Endothelial cell of umbilical vein (primary cell): ENCODE measurements at regions of chr12 and their contacts with region 1.

Region 1: DNA sequence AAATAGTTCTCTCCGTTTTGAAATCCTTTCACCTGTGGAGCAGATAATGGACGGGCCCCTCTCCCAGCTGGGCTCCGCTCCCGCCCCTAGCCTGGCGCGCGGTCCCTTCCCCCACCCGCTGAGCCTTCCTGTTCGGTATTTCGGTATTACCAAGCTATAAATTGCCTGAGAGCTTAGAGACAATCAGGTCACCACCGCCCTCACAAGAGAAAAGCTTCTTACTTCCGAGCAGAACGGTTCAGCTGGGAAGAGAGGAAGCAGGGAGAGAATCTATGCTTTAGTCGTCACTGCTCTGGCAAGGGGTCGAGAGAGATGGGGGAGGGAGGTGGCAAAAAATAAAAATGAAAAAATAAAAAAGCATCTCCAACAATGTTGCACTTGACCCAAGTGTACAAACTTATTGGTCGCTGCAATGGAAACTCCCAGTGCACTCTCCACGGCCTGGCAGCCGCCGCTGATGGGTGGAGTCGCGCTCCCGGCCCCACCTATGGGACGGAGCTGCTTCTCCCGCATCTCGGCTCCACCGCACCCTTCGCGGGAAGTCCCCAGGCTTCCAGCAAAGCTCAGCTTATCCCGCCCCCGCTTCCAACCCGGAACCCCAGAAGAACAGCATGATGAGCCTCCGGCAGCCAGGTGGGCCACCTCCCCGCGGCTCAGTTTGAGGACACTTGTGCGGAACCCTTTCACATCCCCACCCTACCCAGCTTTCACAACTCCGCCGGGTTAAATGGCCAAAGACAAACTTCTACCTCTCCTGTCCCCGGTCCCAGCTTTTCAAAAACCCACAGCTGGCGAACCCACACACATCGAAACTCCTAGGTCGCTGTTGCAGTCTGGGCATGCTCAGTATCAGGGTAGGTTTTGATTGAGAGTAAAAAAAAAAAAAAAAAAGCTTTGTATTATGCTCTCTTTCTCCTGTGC is 832 bp upstream of the SYT1 start:
- DNase-seq: peak; percentile 66
- H3K4me3 ChIP-seq: peak overlapping the region; percentile 45 to 91 (median 88)
- H3K27ac ChIP-seq: peak overlapping the region; percentile 69
- H3K4me1 ChIP-seq: peaks cover 9% of the 10 kb centered on the region
- H3K27me3 ChIP-seq: peaks cover 6 to 9% of the 10 kb centered on the region in 2 experiments
- CTCF ChIP-seq: no peak
- POLR2A ChIP-seq: no peak

Region 2: GRCh38 chr12:78562368-78563205 is 301.2 kb before region 1 on chr12:
- CTCF ChIA-PET with region 1: interaction called, 13 read pairs
- POLR2A ChIA-PET with region 1: no interaction called
- dilution Hi-C with region 1: no loop called
- intact Hi-C with region 1: no loop called
- DNase-seq: peak; percentile 46
- H3K4me3 ChIP-seq: no peak overlapping the region
- H3K27ac ChIP-seq: no peak overlapping the region
- H3K4me1 ChIP-seq: no peaks in the 10 kb centered on the region
- H3K27me3 ChIP-seq: peaks cover 5% of the 10 kb centered on the region in 2 experiments
- CTCF ChIP-seq: peak in 1 of 2 donors; percentile 32
- POLR2A ChIP-seq: no peak

Region 3: GRCh38 chr12:78683031-78683430 is 180.7 kb before region 1 on chr12:
- CTCF ChIA-PET with region 1: no interaction called
- POLR2A ChIA-PET with region 1: no interaction called
- dilution Hi-C with region 1: no loop called
- intact Hi-C with region 1: loop called (anchors 5 kb)
- DNase-seq: peak; percentile 52
- H3K4me3 ChIP-seq: no peak overlapping the region
- H3K27ac ChIP-seq: peak overlapping the region; percentile 5
- H3K4me1 ChIP-seq: peaks cover 20% of the 10 kb centered on the region
- H3K27me3 ChIP-seq: no peaks in the 10 kb centered on the region
- CTCF ChIP-seq: no peak
- POLR2A ChIP-seq: no peak

Region 4: DNA sequence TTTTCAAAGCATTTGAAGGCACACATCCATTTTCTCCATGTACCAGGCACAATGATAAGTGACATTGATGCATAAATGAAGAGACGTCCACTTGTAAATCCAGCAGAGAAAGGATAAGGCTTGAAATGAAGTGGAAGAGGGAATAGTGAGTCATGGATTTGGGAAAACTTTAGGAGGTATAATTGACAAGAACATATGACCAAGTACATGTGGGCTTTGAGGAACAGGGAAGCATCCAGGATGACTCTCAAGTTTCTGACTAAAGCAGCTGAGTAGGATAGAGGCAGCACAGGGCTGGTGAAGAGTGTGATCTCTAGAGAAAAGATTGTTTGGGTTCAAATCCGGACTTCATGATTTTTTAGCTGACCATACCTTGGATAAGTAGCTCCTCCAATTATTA is 42.8 kb before region 1 on chr12:
- CTCF ChIA-PET with region 1: no interaction called
- POLR2A ChIA-PET with region 1: no interaction called
- dilution Hi-C with region 1: no loop called
- intact Hi-C with region 1: no loop called
- DNase-seq: no peak
- H3K4me3 ChIP-seq: no peak overlapping the region
- H3K27ac ChIP-seq: no peak overlapping the region
- H3K4me1 ChIP-seq: no peaks in the 10 kb centered on the region
- H3K27me3 ChIP-seq: no peaks in the 10 kb centered on the region
- CTCF ChIP-seq: no peak
- POLR2A ChIP-seq: no peak

Region 5: DNA sequence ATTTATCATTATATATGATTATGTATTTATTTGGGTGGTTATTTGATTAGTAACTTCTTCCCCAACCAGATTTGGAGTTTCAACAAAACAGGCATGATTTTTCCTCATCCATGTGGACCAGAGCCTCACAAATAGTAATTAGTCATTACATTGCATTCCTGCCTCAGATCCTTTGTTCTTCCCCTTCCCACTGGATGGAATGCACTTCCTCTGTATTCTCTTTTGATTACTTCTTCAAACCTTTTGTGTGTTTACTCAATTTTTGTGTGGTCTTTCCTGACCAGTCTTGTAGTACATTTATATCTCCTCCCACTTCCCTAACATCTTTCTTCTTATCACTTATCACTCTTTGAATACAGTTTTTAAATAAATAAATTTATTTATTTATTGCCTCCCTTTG is 16.3 kb after region 1 on chr12:
- CTCF ChIA-PET with region 1: interaction called, 6 read pairs
- POLR2A ChIA-PET with region 1: interaction called, 3 read pairs
- dilution Hi-C with region 1: no loop called
- intact Hi-C with region 1: loop called (anchors 1 kb)
- DNase-seq: peak; percentile 28
- H3K4me3 ChIP-seq: no peak overlapping the region
- H3K27ac ChIP-seq: peak overlapping the region; percentile 32
- H3K4me1 ChIP-seq: peaks cover 16% of the 10 kb centered on the region
- H3K27me3 ChIP-seq: no peaks in the 10 kb centered on the region
- CTCF ChIP-seq: no peak
- POLR2A ChIP-seq: no peak

Region 6: DNA sequence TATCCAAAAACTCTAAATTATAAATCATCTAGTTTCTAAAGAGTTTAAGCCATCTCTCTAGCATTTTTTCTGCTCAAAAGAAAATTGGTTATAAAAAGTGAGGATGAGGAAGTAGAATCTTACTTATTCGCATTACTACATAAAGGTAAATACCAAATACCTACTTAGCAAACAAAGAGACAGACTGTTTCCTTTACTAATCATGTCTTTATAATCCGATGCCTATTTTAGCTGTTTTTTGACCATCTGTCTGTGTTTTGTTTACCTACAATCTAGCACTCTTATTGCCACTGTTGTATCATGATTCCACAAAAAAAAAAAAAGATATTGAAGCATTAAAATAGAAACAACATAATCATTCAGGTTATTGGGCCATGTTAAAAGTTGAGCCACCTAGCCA is 430.8 kb after region 1 on chr12:
- CTCF ChIA-PET with region 1: no interaction called
- POLR2A ChIA-PET with region 1: no interaction called
- dilution Hi-C with region 1: no loop called
- intact Hi-C with region 1: no loop called
- DNase-seq: no peak
- H3K4me3 ChIP-seq: no peak overlapping the region
- H3K27ac ChIP-seq: no peak overlapping the region
- H3K4me1 ChIP-seq: peaks cover 9% of the 10 kb centered on the region
- H3K27me3 ChIP-seq: no peaks in the 10 kb centered on the region
- CTCF ChIP-seq: no peak
- POLR2A ChIP-seq: no peak